Right ventricle myocardium inferior (tissue), 1 donor: ENCODE measurements at regions of chr4 and their contacts with region 1.

Region 1: GRCh38 chr4:156968479-156968984 is 3.1 kb downstream of the PDGFC start:
- DNase-seq: no peak
- ATAC-seq: peak; percentile 43

Region 2: DNA sequence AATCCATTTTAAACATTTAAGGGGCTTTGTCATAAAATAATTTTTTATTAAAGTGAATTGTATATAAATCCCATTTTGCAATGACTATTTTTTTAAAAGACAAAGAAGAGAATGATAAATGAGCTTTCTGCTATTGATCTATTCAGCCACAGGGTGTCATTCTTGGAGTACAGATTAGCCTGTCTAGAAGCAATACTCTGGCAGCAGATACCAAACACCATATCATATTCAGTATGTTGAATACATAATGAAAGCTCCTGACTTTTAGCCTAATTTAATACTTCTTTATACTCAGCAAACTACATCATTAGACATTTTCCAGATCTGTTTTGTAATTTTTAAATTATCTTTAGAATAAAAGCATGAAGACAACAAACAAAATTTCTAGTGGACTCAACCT is 493.2 kb before region 1 on chr4:
- intact Hi-C with region 1: loop called (anchors 10 kb)
- DNase-seq: no peak
- ATAC-seq: peak; percentile 50

Region 3: GRCh38 chr4:156771171-156771837 is 197.2 kb before region 1 on chr4:
- intact Hi-C with region 1: loop called (anchors 10 kb)
- DNase-seq: no peak
- ATAC-seq: peak; percentile 40

Region 4: GRCh38 chr4:156941940-156942548 is 26.5 kb before region 1 on chr4:
- intact Hi-C with region 1: loop called (anchors 2 kb)
- DNase-seq: no peak
- ATAC-seq: peak; percentile 79

Region 5: DNA sequence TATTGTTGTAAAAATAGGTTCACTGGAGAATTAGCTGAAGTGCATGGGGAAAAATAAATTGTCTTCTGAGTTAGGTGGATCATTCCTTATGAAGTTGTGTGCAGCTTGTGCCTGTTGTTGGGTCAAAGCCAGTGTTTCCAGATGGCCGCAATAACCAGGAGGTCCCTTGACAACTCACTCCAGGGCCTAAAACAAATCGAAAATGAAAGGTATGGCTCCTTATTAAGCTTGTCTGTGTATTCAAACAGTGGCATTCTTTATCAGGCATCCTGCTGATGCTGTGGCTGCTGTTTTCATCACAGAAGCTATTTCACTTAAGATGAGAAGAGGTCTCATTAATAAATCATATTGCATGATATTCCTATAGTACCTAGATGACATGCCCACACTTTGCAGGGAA is 332.2 kb after region 1 on chr4:
- intact Hi-C with region 1: no loop called
- DNase-seq: no peak
- ATAC-seq: no peak

Region 6: GRCh38 chr4:157978680-157979361 is 1010.3 kb after region 1 on chr4:
- intact Hi-C with region 1: loop called (anchors 10 kb)
- DNase-seq: peak; percentile 69
- ATAC-seq: peak; percentile 64